Mammary epithelial cell (primary cell): ENCODE measurements at regions of chr12 and their contacts with region 1.

Region 1: GRCh38 chr12:7031306-7031705 is 13.0 kb upstream of the LPCAT3 start:
- DNase-seq: no peak
- H3K4me3 ChIP-seq: no peak overlapping the region
- H3K27ac ChIP-seq: no peak overlapping the region
- H3K4me1 ChIP-seq: no peaks in the 10 kb centered on the region
- H3K27me3 ChIP-seq: no peaks in the 10 kb centered on the region
- CTCF ChIP-seq: no peak

Region 2: DNA sequence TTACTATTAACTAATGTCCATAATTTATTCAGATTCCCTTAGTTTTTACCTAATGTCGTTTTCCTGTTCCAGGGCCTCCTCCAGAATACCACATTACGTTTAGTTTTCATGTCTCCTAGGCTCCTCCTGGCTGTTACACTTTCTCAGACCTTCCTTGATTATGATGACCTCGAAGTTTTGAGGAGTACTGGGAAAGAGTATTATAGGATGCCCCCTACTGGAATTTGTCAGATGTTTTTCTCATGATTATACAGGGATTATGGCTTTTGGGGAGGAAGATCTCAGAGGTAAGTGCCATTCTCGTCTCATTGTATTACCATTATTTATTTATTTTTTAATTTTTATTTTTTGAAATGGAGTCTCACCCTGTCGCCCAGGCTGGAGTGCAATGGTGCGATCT is 11.5 kb after region 1 on chr12:
- CTCF ChIA-PET with region 1: no interaction called
- dilution Hi-C with region 1: no loop called
- in situ Hi-C with region 1: no loop called
- intact Hi-C with region 1: no loop called
- DNase-seq: peak; percentile 52
- H3K4me3 ChIP-seq: no peak overlapping the region
- H3K27ac ChIP-seq: no peak overlapping the region
- H3K4me1 ChIP-seq: peaks cover 13% of the 10 kb centered on the region
- H3K27me3 ChIP-seq: no peaks in the 10 kb centered on the region
- CTCF ChIP-seq: peak; percentile 40 to 56

Region 3: GRCh38 chr12:7068240-7068993 is 37.1 kb after region 1 on chr12:
- CTCF ChIA-PET with region 1: no interaction called
- dilution Hi-C with region 1: loop called (anchors 5 kb)
- in situ Hi-C with region 1: no loop called
- intact Hi-C with region 1: no loop called
- DNase-seq: no peak
- H3K4me3 ChIP-seq: no peak overlapping the region
- H3K27ac ChIP-seq: no peak overlapping the region
- H3K4me1 ChIP-seq: no peaks in the 10 kb centered on the region
- H3K27me3 ChIP-seq: no peaks in the 10 kb centered on the region
- CTCF ChIP-seq: no peak